ENCODE measurements at regions of chr11 and their contacts with region 1.

Region 1: GRCh38 chr11:809287-810039 is at the start of gene RPLP2:
- DNase-seq: peak; percentile 98
- ATAC-seq: peak; percentile 81
- H3K4me3 Mint-ChIP-seq: peak within 1 kb of the TSS; percentile 91
- H3K27ac Mint-ChIP-seq: peak within 1 kb of the TSS; percentile 97
- H3K4me1 Mint-ChIP-seq: peaks cover 27% of the 10 kb centered on the region
- H3K27me3 Mint-ChIP-seq: no peaks in the 10 kb centered on the region
- total RNA-seq, gene RPLP2: 2,888 to 3,019 TPM

Region 2: GRCh38 chr11:441418-442274 is 367.8 kb before region 1 on chr11 and contains the start of gene ANO9:
- POLR2A ChIA-PET with region 1: no interaction called
- DNase-seq: peak; percentile 76
- ATAC-seq: peak; percentile 93
- H3K4me3 Mint-ChIP-seq: peak within 1 kb of the TSS; percentile 87
- H3K27ac Mint-ChIP-seq: peak within 1 kb of the TSS; percentile 56
- H3K4me1 Mint-ChIP-seq: peaks cover 16% of the 10 kb centered on the region
- H3K27me3 Mint-ChIP-seq: peaks cover 4% of the 10 kb centered on the region
- total RNA-seq, gene ANO9: 115 to 122 TPM

Region 3: GRCh38 chr11:597166-597725 is 212.2 kb before region 1 on chr11:
- POLR2A ChIA-PET with region 1: no interaction called
- DNase-seq: no peak
- ATAC-seq: no peak
- H3K4me3 Mint-ChIP-seq: no peak overlapping the region
- H3K27ac Mint-ChIP-seq: no peak overlapping the region
- H3K4me1 Mint-ChIP-seq: peaks cover 14% of the 10 kb centered on the region
- H3K27me3 Mint-ChIP-seq: no peaks in the 10 kb centered on the region

Region 4: GRCh38 chr11:719214-720016 is 90.0 kb before region 1 on chr11:
- POLR2A ChIA-PET with region 1: no interaction called
- DNase-seq: no peak
- ATAC-seq: no peak
- H3K4me3 Mint-ChIP-seq: peak overlapping the region; percentile 51
- H3K27ac Mint-ChIP-seq: no peak overlapping the region
- H3K4me1 Mint-ChIP-seq: peaks cover 11% of the 10 kb centered on the region
- H3K27me3 Mint-ChIP-seq: peaks cover 25% of the 10 kb centered on the region

Region 5: DNA sequence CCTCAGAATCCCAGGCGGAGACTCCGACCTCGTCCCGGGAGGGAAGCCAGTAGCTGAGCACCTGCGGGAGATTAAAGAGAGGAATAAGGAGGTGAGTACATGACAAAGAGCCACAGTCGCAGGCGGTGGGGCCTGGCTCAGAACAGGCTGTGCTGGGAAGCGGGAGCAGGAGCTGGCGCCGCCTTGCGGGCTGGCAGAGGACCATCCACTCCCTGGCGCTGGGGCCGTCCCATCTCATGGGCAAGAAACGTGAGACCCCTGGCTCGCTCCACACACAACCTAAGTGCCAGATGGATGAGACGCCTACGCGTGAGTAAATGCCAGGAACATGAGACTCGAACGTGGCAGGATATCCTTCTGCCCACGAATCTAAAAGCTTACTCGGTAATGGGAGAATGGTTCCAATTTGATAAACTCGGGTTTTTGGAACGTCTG is 25.9 kb before region 1 on chr11:
- POLR2A ChIA-PET with region 1: no interaction called
- DNase-seq: peak; percentile 44
- ATAC-seq: no peak
- H3K4me3 Mint-ChIP-seq: no peak overlapping the region
- H3K27ac Mint-ChIP-seq: no peak overlapping the region
- H3K4me1 Mint-ChIP-seq: peaks cover 12% of the 10 kb centered on the region
- H3K27me3 Mint-ChIP-seq: no peaks in the 10 kb centered on the region

Region 6: DNA sequence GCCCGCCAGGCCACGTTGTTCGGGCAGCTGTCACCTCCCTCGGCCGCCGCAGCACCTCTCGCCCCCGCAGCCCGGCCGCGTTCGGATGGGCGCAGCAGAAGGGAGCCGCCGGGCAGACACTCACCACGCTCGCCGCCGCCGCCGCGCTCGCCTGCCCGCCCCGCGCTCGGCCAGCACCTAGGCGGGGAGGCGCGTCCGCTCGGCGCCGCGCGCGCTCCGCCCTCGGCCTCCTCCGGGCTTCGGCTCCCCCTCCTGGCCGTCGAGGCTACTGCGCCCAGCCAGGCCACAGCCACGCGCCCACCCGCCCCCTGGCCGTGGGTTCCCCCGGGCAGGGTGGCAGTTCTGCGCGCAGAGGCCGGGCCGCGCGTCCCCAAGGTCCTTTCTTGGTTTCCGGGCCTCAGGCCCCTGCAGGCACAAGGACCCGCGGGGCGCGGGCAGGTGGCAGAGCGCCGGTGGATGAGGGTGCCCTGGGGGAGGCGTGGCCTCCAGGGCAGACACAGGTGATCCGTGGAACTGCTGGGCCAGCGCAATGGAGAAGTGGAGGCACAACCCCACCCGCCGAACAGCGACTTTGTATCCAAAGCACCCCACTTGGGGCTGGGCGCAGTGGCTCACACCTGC is 11.3 kb before region 1 on chr11 and contains the start of gene SLC25A22:
- POLR2A ChIA-PET with region 1: interaction called, 20 read pairs
- DNase-seq: peak; percentile 96
- ATAC-seq: peak; percentile 48
- H3K4me3 Mint-ChIP-seq: peak within 1 kb of the TSS; percentile 98
- H3K27ac Mint-ChIP-seq: peak within 1 kb of the TSS; percentile 95
- H3K4me1 Mint-ChIP-seq: peaks cover 6% of the 10 kb centered on the region
- H3K27me3 Mint-ChIP-seq: no peaks in the 10 kb centered on the region
- total RNA-seq, gene SLC25A22: 35.1 to 35.8 TPM